A549 (cell line): ENCODE measurements at regions of chr7 and their contacts with region 1.

Region 1: DNA sequence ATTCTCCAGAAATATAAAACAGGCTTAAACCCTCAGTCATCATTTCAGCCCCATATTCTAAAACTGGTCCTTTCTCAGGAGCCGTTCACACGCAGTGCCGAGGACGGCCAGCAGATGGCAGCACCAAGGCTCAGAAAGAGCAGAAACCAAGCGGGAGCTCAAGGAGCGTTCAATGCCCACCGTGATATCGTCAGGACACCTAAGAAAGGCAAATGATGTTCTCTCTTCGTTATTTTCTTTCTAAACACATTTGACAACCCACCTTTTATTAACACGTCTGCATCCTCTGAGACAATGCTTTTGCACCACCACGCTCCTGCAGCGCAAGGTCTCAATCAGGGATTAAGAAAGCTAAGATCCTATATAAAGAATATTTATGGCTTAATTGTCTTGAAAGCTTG is 45.7 kb upstream of the RBM33 start:
- DNase-seq: peak; percentile 70 to 75
- ATAC-seq: peak; percentile 74 to 91
- H3K4me3 ChIP-seq: no peak overlapping the region
- H3K27ac ChIP-seq: peak overlapping the region; percentile 16 to 49; a peak in 2 of 6 replicates
- H3K4me1 ChIP-seq: peaks cover 27% of the 10 kb centered on the region
- CTCF ChIP-seq: peak; percentile 91
- EP300 ChIP-seq: no peak
- POLR2A ChIP-seq: no peak
- RAD21 ChIP-seq: peak; percentile 88 to 89

Region 2: DNA sequence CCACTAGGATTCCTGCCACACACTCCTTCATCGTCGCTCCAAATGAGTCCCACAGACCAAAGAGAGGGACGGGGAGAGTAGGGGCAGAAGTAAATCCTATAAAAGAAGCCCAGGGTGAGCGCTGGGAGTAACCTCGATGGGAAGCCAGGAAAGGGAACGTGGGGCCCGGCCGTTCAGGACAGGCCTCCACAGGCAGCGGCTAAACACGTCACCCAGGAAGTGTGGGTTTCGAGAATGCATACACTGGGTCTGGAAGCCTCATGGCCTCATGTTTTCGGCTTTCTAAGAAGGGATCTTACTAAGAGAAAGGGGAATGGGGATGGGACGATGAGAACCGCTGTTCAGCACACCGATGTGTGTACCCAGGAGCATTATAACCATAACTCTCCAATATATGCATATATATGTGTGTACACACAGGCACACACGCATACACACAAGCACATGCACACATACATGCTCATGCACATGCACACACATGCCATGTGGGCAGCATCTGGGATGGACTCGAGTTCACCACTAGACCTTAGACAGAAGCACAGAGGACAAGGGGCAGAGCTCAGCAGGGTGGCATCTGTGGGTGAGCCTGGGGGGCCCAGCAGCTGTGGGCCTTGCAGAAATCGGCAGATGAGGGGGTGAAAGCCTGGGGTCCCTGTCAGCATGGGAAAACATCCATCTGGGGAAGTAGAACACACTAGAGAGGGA is 37.7 kb before region 1 on chr7:
- CTCF ChIA-PET with region 1: no interaction called
- POLR2A ChIA-PET with region 1: no interaction called
- DNase-seq: no peak
- ATAC-seq: peak in 1 of 2 experiments; percentile 16; a peak in 1 of 6 replicates
- H3K4me3 ChIP-seq: no peak overlapping the region
- H3K27ac ChIP-seq: no peak overlapping the region
- H3K4me1 ChIP-seq: no peaks in the 10 kb centered on the region
- CTCF ChIP-seq: no peak
- EP300 ChIP-seq: no peak
- POLR2A ChIP-seq: no peak
- RAD21 ChIP-seq: no peak

Region 3: GRCh38 chr7:155610633-155611193 is 11.9 kb after region 1 on chr7:
- CTCF ChIA-PET with region 1: interaction called, 29 read pairs
- POLR2A ChIA-PET with region 1: no interaction called
- DNase-seq: no peak
- ATAC-seq: no peak; a peak in 1 of 6 replicates
- H3K4me3 ChIP-seq: no peak overlapping the region
- H3K27ac ChIP-seq: peak overlapping the region in 1 of 2 experiments; percentile 28; a peak in 1 of 6 replicates
- H3K4me1 ChIP-seq: peaks cover 4% of the 10 kb centered on the region; the same call in 2 of the 3 replicates
- CTCF ChIP-seq: no peak
- EP300 ChIP-seq: no peak
- POLR2A ChIP-seq: no peak
- RAD21 ChIP-seq: no peak

Region 4: DNA sequence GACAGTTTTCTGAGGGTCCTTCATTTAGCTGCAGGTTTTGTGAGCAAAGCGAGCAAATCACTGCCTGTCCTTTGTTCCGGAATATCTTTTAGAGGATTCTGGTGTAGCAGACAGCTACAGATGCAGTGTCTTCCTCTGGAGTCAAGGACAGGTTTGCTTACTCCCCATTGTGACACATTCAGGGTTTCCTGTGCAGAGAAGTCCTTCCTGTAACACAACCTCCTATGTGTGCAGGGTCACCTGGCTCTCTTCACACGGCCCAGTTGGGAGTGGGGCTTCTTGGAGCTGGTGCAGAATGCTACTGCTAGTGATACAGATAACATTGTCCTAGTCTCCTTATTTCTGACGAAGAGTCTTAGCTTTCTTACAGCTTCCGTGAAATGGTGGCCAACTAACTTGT is 93.5 kb after region 1 on chr7:
- CTCF ChIA-PET with region 1: interaction called, 14 read pairs
- POLR2A ChIA-PET with region 1: no interaction called
- DNase-seq: no peak
- ATAC-seq: no peak
- H3K4me3 ChIP-seq: no peak overlapping the region
- H3K27ac ChIP-seq: no peak overlapping the region
- H3K4me1 ChIP-seq: 0 out of 3 replicates have a peak, but pooled peaks cover 3% of the 10 kb centered on the region
- CTCF ChIP-seq: no peak
- EP300 ChIP-seq: no peak
- POLR2A ChIP-seq: no peak
- RAD21 ChIP-seq: no peak

Region 5: DNA sequence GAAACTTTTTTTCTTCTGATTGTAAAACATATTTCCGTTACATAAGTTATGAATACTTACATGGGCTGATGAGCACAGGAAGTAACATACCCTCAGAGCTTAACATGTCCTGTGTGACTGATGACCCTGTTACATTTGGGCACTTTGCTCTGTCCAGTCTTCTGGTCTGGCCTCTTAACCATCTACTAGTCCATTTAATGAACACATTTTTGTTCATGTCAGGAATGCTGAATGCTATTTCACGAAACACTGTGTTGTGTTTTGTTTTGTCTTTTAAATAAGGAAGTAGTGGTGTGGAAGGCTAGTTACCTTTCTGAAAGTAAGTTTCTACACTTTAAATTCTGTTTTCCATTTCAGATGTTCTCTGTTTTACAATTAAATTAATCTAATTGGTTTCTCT is 123.3 kb after region 1 on chr7:
- CTCF ChIA-PET with region 1: interaction called, 20 read pairs
- POLR2A ChIA-PET with region 1: no interaction called
- DNase-seq: no peak
- ATAC-seq: no peak
- H3K4me3 ChIP-seq: no peak overlapping the region
- H3K27ac ChIP-seq: no peak overlapping the region
- H3K4me1 ChIP-seq: no peaks in the 10 kb centered on the region
- CTCF ChIP-seq: no peak
- EP300 ChIP-seq: no peak
- POLR2A ChIP-seq: no peak
- RAD21 ChIP-seq: no peak

Region 6: DNA sequence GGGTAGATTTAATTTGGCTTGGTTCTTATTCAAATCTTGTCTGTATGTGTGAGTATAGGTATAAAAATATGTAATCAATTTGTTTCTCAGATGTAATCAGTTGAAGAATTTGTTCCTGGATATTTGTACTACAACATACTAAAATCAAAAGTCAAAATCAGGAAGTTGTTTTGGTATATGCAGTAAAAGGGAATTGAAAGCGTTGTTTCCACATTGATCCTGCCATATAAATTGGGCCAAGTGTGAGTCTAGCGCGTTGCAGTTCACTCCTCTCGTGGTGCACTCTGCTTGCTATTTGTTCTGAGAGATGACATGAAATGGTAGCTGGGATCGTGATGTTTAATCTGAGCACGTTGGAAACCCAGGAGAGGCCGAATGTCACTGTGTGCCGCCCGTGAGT is 157.5 kb after region 1 on chr7:
- CTCF ChIA-PET with region 1: interaction called, 15 read pairs
- POLR2A ChIA-PET with region 1: no interaction called
- DNase-seq: no peak
- ATAC-seq: no peak
- H3K4me3 ChIP-seq: no peak overlapping the region
- H3K27ac ChIP-seq: no peak overlapping the region
- H3K4me1 ChIP-seq: no peaks in the 10 kb centered on the region
- CTCF ChIP-seq: no peak
- EP300 ChIP-seq: no peak
- POLR2A ChIP-seq: no peak
- RAD21 ChIP-seq: no peak